GM12878 (cell line): ENCODE measurements at regions of chr6 and their contacts with region 1.

Region 1: GRCh38 chr6:15305496-15305895 is 59.6 kb downstream of the JARID2 start:
- DNase-seq: no peak
- ATAC-seq: peak; percentile 67
- H3K4me3 ChIP-seq: peak overlapping the region; percentile 37; the same call in 1 of the 2 replicates
- H3K27ac ChIP-seq: peak overlapping the region; percentile 87
- H3K4me1 ChIP-seq: peaks cover 68% of the 10 kb centered on the region
- H3K27me3 ChIP-seq: no peaks in the 10 kb centered on the region
- CTCF ChIP-seq: no peak
- EP300 ChIP-seq: peak in 1 of 2 experiments; percentile 55; a peak in 2 of 4 replicates
- POLR2A ChIP-seq: no peak
- RAD21 ChIP-seq: no peak

Region 2: DNA sequence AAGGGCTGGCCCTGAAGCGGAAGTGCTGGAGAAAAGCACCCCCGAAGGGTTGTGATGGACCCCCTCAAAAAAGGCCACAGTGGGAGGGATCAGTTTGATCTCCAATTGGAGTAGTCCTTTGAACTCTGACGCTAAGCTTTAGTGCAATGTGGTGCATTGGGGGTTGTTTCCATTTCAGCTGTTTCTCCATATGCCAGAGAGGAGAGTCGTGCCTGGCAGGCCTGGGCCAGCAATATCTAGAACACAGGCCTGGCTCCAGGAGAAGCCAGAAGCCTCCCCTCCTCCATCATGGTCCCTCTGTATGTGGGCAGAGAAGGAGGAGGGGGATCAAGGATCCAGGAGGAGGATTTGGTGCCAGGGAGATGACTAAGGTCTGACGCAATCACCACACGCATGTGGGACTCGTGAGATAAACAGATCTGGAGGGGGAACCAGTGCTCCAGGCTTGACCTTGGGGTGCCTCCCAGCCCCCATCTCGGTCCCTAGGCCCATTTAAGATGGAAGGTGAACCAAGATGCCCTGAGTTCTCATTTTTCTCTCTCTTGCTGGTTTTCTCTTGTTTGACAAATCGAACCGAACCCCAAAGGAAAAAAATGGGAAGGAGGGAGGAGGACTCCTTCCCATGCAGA is 577.0 kb before region 1 on chr6:
- CTCF ChIA-PET with region 1: no interaction called
- POLR2A ChIA-PET with region 1: no interaction called
- RAD21 ChIA-PET with region 1: no interaction called
- SMC1A ChIA-PET with region 1: no interaction called
- in situ Hi-C with region 1: no loop called
- intact Hi-C with region 1: no loop called
- DNase-seq: no peak
- ATAC-seq: no peak
- H3K4me3 ChIP-seq: no peak overlapping the region
- H3K27ac ChIP-seq: peak overlapping the region; percentile 67
- H3K4me1 ChIP-seq: peaks cover 24% of the 10 kb centered on the region
- H3K27me3 ChIP-seq: no peaks in the 10 kb centered on the region
- CTCF ChIP-seq: no peak
- EP300 ChIP-seq: no peak
- POLR2A ChIP-seq: no peak
- RAD21 ChIP-seq: no peak

Region 3: GRCh38 chr6:15287670-15288375 is 17.7 kb before region 1 on chr6:
- CTCF ChIA-PET with region 1: interaction called, 8 read pairs
- POLR2A ChIA-PET with region 1: interaction called, 8 read pairs
- RAD21 ChIA-PET with region 1: interaction called, 32 read pairs
- SMC1A ChIA-PET with region 1: interaction called, 43 read pairs
- in situ Hi-C with region 1: no loop called
- intact Hi-C with region 1: no loop called
- DNase-seq: peak; percentile 78
- ATAC-seq: peak; percentile 99
- H3K4me3 ChIP-seq: peak overlapping the region; percentile 11; the same call in 1 of the 2 replicates
- H3K27ac ChIP-seq: peak overlapping the region; percentile 79
- H3K4me1 ChIP-seq: peaks cover 24% of the 10 kb centered on the region
- H3K27me3 ChIP-seq: no peaks in the 10 kb centered on the region
- CTCF ChIP-seq: no peak
- EP300 ChIP-seq: peak in 1 of 2 experiments; percentile 78; a peak in 2 of 4 replicates
- POLR2A ChIP-seq: no peak
- RAD21 ChIP-seq: no peak

Region 4: GRCh38 chr6:15317934-15318902 is 12.7 kb after region 1 on chr6:
- CTCF ChIA-PET with region 1: interaction called, 15 read pairs
- POLR2A ChIA-PET with region 1: interaction called, 13 read pairs
- RAD21 ChIA-PET with region 1: interaction called, 59 read pairs
- SMC1A ChIA-PET with region 1: interaction called, 301 read pairs
- in situ Hi-C with region 1: no loop called
- intact Hi-C with region 1: no loop called
- DNase-seq: no peak
- ATAC-seq: peak; percentile 52
- H3K4me3 ChIP-seq: peak overlapping the region; percentile 44; the same call in 1 of the 2 replicates
- H3K27ac ChIP-seq: peak overlapping the region; percentile 82
- H3K4me1 ChIP-seq: peaks cover 73% of the 10 kb centered on the region
- H3K27me3 ChIP-seq: no peaks in the 10 kb centered on the region
- CTCF ChIP-seq: no peak
- EP300 ChIP-seq: no peak
- POLR2A ChIP-seq: no peak
- RAD21 ChIP-seq: no peak

Region 5: GRCh38 chr6:15369838-15370237 is 64.3 kb after region 1 on chr6:
- CTCF ChIA-PET with region 1: interaction called, 3 read pairs
- POLR2A ChIA-PET with region 1: interaction called, 14 read pairs
- RAD21 ChIA-PET with region 1: no interaction called
- SMC1A ChIA-PET with region 1: no interaction called
- in situ Hi-C with region 1: no loop called
- intact Hi-C with region 1: no loop called
- DNase-seq: no peak
- ATAC-seq: peak; percentile 24; the same call in 2 of the 3 replicates
- H3K4me3 ChIP-seq: no peak overlapping the region
- H3K27ac ChIP-seq: peak overlapping the region; percentile 26; the same call in 1 of the 2 replicates
- H3K4me1 ChIP-seq: peaks cover 12% of the 10 kb centered on the region
- H3K27me3 ChIP-seq: no peaks in the 10 kb centered on the region
- CTCF ChIP-seq: no peak
- EP300 ChIP-seq: no peak
- POLR2A ChIP-seq: no peak
- RAD21 ChIP-seq: no peak